ENCODE measurements at regions of chr9 and their contacts with region 1.

Region 1: GRCh38 chr9:133144137-133144903 is 19.4 kb downstream of the GBGT1 start:
- DNase-seq: peak; percentile 97
- ATAC-seq: peak; percentile 75
- H3K4me3 Mint-ChIP-seq: peak overlapping the region; percentile 51
- H3K27ac Mint-ChIP-seq: peak overlapping the region; percentile 76
- H3K4me1 Mint-ChIP-seq: peaks cover 63% of the 10 kb centered on the region
- H3K27me3 Mint-ChIP-seq: no peaks in the 10 kb centered on the region
- CTCF ChIP-seq: peak; percentile 98

Region 2: DNA sequence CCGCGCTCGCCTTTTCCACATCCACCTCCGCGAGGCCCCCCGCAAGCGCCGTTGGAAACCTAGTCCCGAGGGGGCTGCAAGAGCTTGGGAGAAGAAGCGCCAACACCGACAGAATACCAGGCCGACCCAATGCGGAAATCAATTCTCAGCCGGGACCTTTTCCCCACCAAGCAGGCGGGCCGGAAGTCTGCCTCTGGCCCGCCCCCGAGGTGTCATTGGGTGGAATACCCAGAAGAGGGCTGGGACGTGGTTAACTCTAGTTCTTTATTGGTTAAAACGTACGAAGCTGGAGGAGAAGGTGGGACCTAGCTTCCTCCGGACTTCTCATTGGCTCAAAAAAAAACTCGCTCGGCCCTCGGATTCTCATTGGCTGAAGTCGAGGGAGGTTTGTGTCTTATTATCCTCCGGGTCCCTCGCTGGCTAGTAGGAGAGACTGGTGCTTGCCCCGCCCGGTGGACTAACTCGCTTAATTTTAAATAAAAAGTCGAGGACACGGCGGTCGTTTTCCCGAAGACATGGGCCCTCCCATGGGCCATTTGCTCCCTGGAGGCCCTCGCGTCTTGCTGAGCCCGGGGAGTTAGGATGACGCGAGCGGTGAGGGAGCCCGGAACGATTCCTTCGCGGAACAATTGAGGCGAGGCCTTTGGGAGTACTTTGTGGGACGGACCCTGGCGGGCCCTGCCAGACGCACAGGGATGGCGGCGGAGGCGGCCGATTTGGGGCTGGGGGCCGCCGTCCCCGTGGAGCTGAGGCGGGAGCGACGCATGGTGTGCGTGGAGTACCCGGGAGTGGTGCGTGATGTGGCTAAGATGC is 113.8 kb before region 1 on chr9 and contains the start of gene GTF3C5:
- CTCF ChIA-PET with region 1: interaction called, 14 read pairs
- POLR2A ChIA-PET with region 1: interaction called, 6 read pairs
- intact Hi-C with region 1: no loop called
- DNase-seq: peak; percentile 96
- ATAC-seq: peak; percentile 98
- H3K4me3 Mint-ChIP-seq: peak within 1 kb of the TSS; percentile 87
- H3K27ac Mint-ChIP-seq: peak within 1 kb of the TSS; percentile 92
- H3K4me1 Mint-ChIP-seq: peaks cover 35% of the 10 kb centered on the region
- H3K27me3 Mint-ChIP-seq: no peaks in the 10 kb centered on the region
- CTCF ChIP-seq: no peak
- total RNA-seq, gene GTF3C5: 87.6 to 95.3 TPM

Region 3: GRCh38 chr9:133048569-133048968 is 95.8 kb before region 1 on chr9:
- CTCF ChIA-PET with region 1: interaction called, 11 read pairs
- POLR2A ChIA-PET with region 1: no interaction called
- intact Hi-C with region 1: no loop called
- DNase-seq: peak; percentile 54
- ATAC-seq: peak; percentile 84
- H3K4me3 Mint-ChIP-seq: no peak overlapping the region
- H3K27ac Mint-ChIP-seq: no peak overlapping the region
- H3K4me1 Mint-ChIP-seq: peaks cover 7% of the 10 kb centered on the region
- H3K27me3 Mint-ChIP-seq: no peaks in the 10 kb centered on the region
- CTCF ChIP-seq: peak; percentile 51

Region 4: GRCh38 chr9:133075925-133076630 is 68.2 kb before region 1 on chr9:
- CTCF ChIA-PET with region 1: interaction called, 14 read pairs
- POLR2A ChIA-PET with region 1: no interaction called
- intact Hi-C with region 1: no loop called
- DNase-seq: no peak
- ATAC-seq: no peak
- H3K4me3 Mint-ChIP-seq: no peak overlapping the region
- H3K27ac Mint-ChIP-seq: no peak overlapping the region
- H3K4me1 Mint-ChIP-seq: no peaks in the 10 kb centered on the region
- H3K27me3 Mint-ChIP-seq: no peaks in the 10 kb centered on the region
- CTCF ChIP-seq: no peak

Region 5: GRCh38 chr9:133115448-133116345 is 28.6 kb before region 1 on chr9:
- CTCF ChIA-PET with region 1: interaction called, 376 read pairs
- POLR2A ChIA-PET with region 1: interaction called, 11 read pairs
- intact Hi-C with region 1: no loop called
- DNase-seq: peak; percentile 91
- ATAC-seq: peak; percentile 90
- H3K4me3 Mint-ChIP-seq: peak overlapping the region; percentile 55
- H3K27ac Mint-ChIP-seq: peak overlapping the region; percentile 85
- H3K4me1 Mint-ChIP-seq: peaks cover 64% of the 10 kb centered on the region
- H3K27me3 Mint-ChIP-seq: no peaks in the 10 kb centered on the region
- CTCF ChIP-seq: no peak

Region 6: GRCh38 chr9:133252301-133252780 is 108.0 kb after region 1 on chr9:
- CTCF ChIA-PET with region 1: no interaction called
- POLR2A ChIA-PET with region 1: no interaction called
- intact Hi-C with region 1: no loop called
- DNase-seq: no peak
- ATAC-seq: no peak
- H3K4me3 Mint-ChIP-seq: no peak overlapping the region
- H3K27ac Mint-ChIP-seq: no peak overlapping the region
- H3K4me1 Mint-ChIP-seq: no peaks in the 10 kb centered on the region
- H3K27me3 Mint-ChIP-seq: peaks cover 4% of the 10 kb centered on the region
- CTCF ChIP-seq: no peak

Region 7: DNA sequence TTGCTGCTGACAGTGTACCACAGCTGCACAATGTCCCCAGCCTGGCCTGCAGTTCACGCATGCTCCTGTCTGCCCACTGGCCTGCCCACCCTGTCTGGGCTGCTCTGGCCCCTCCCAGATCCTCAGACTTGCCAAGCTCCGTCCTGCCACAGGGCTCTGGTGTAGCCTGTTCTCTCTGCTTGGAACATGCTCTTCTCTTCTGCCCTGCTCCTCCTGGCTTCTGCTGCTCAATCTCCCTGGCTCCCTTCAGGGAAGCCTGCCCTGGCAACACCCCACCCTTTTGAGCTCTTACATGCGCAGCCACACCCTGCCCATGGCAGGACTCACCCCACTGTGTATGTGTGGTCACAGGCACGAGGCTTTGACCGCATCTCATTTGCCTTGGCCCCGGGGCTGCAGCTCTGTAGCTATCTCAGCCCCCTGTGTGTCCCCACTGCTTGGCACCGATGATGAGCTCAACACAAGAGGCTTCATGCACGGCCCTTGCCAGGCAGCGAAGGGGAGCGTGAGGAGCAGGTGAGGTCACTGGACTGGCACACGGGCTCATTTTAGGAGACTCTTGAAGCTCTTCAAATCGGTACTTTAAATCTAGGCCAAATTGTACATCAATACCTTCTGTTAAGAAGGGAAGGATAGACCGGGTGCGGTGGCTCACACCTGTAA is 943.9 kb after region 1 on chr9:
- CTCF ChIA-PET with region 1: no interaction called
- POLR2A ChIA-PET with region 1: no interaction called
- intact Hi-C with region 1: no loop called
- DNase-seq: no peak
- ATAC-seq: no peak
- H3K4me3 Mint-ChIP-seq: no peak overlapping the region
- H3K27ac Mint-ChIP-seq: no peak overlapping the region
- H3K4me1 Mint-ChIP-seq: no peaks in the 10 kb centered on the region
- H3K27me3 Mint-ChIP-seq: peaks cover 4% of the 10 kb centered on the region
- CTCF ChIP-seq: no peak